Activated naive CD4-positive, alpha-beta T cell treated with anti-CD3 and anti-CD28 coated beads for 36 hours (primary cell): ENCODE measurements at regions of chr18 and their contacts with region 1.

Region 1: GRCh38 chr18:74551936-74552555 is 17.7 kb downstream of the CNDP1 start:
- DNase-seq: peak; percentile 88
- H3K4me3 Mint-ChIP-seq: no peak overlapping the region
- H3K27ac Mint-ChIP-seq: no peak overlapping the region
- H3K4me1 Mint-ChIP-seq: no peaks in the 10 kb centered on the region
- H3K27me3 Mint-ChIP-seq: peaks cover 2% of the 10 kb centered on the region

Region 2: GRCh38 chr18:74196220-74197119 is 355.6 kb before region 1 on chr18:
- CTCF ChIA-PET with region 1: interaction called, 28 read pairs
- intact Hi-C with region 1: loop called (anchors 1 kb)
- DNase-seq: peak; percentile 64
- H3K4me3 Mint-ChIP-seq: peak overlapping the region; percentile 63
- H3K27ac Mint-ChIP-seq: peak overlapping the region; percentile 28
- H3K4me1 Mint-ChIP-seq: peaks cover 3% of the 10 kb centered on the region
- H3K27me3 Mint-ChIP-seq: peaks cover under 1% of the 10 kb centered on the region

Region 3: DNA sequence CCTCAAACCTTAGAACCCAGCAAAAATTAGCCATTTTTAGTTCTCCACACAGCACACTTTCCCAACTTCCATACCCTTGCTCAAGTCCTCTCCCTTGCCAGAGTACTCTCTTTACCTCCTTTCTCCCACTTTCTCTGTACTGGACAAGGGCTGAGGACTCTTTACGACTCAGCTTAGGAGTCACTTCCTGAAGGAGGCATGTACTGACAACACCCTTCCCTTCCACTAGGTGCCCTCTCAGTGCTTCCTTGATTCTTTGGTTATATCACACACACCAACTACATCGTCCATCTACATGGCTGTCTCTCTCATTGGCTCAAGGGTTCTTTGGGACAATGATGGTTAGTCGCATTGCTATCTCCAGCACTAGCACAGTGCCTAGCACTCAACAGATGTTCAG is 241.6 kb before region 1 on chr18:
- CTCF ChIA-PET with region 1: interaction called, 10 read pairs
- intact Hi-C with region 1: loop called (anchors 1 kb)
- DNase-seq: peak; percentile 18
- H3K4me3 Mint-ChIP-seq: no peak overlapping the region
- H3K27ac Mint-ChIP-seq: no peak overlapping the region
- H3K4me1 Mint-ChIP-seq: no peaks in the 10 kb centered on the region
- H3K27me3 Mint-ChIP-seq: peaks cover 20% of the 10 kb centered on the region

Region 4: DNA sequence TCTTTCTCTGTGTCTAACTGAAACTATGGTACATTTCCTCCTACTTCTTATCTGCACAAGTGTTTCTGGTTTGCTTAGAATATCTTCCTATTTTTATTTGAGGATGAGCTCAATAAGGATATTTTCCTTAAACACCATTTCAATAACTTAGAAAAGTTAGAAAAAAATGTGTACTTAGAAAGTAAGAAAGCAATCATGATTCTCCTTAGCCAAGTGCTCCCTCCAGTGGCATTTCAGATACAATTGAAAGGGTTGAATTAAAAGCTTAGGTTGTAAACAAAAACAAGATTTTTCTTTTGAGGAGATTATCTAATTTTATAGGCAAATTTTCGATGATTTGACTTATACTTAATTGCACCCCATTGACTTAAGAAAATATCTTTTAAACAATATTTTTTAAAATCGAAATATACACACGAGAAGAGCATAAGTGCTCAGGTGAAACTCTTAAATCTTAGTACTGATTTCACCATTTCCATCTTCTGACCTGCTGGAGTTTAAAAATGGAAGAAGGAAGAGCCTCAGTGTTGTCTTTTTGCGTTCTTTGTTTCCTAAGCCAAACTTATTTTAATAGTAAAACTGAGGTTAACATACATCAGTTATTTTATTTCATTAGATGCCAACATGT is 209.5 kb before region 1 on chr18:
- CTCF ChIA-PET with region 1: interaction called, 14 read pairs
- intact Hi-C with region 1: no loop called
- DNase-seq: peak; percentile 56
- H3K4me3 Mint-ChIP-seq: no peak overlapping the region
- H3K27ac Mint-ChIP-seq: no peak overlapping the region
- H3K4me1 Mint-ChIP-seq: no peaks in the 10 kb centered on the region
- H3K27me3 Mint-ChIP-seq: peaks cover 2% of the 10 kb centered on the region

Region 5: GRCh38 chr18:74353169-74353775 is 198.8 kb before region 1 on chr18:
- CTCF ChIA-PET with region 1: interaction called, 27 read pairs
- intact Hi-C with region 1: loop called (anchors 1 kb)
- DNase-seq: peak; percentile 77
- H3K4me3 Mint-ChIP-seq: no peak overlapping the region
- H3K27ac Mint-ChIP-seq: no peak overlapping the region
- H3K4me1 Mint-ChIP-seq: peaks cover 6% of the 10 kb centered on the region
- H3K27me3 Mint-ChIP-seq: no peaks in the 10 kb centered on the region

Region 6: DNA sequence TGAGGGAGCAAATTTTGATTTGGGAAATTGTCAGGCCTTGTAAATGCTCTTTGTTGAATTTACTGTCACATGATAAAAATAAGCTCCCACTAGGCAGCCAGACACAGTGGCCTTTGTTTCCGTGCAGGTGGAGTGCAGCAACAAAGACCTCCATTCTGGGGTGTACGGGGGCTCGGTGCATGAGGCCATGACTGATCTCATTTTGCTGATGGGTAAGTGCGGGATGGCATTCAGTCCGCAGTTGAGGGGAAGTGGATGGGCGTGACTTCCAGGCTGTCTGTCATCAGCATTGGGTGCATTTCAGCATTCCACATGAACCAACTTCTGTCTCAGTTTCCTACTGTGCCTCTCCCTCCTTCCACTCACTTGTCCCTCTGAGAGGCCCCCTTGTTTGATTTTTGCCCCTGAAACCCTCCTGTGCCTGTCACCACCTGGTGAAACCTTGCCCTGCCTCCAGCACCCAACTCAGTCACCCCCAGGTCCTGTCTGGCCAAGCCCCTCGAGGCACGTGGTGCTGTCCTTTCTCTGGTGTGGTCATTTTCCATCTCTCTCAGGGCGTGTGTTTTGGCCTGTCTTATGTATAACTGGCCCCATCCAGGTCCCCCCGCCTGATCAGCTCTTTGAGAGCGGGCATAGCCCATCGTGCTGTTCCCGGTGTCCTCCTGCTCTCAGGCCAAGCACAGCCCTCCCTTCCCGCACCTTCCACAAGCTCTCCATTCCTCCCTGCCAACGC is 39.6 kb before region 1 on chr18:
- CTCF ChIA-PET with region 1: interaction called, 12 read pairs
- intact Hi-C with region 1: no loop called
- DNase-seq: no peak
- H3K4me3 Mint-ChIP-seq: no peak overlapping the region
- H3K27ac Mint-ChIP-seq: no peak overlapping the region
- H3K4me1 Mint-ChIP-seq: no peaks in the 10 kb centered on the region
- H3K27me3 Mint-ChIP-seq: no peaks in the 10 kb centered on the region

Region 7: GRCh38 chr18:74682991-74683297 is 130.9 kb after region 1 on chr18:
- CTCF ChIA-PET with region 1: no interaction called
- intact Hi-C with region 1: no loop called
- DNase-seq: no peak
- H3K4me3 Mint-ChIP-seq: no peak overlapping the region
- H3K27ac Mint-ChIP-seq: no peak overlapping the region
- H3K4me1 Mint-ChIP-seq: peaks cover 11% of the 10 kb centered on the region
- H3K27me3 Mint-ChIP-seq: no peaks in the 10 kb centered on the region